AG04450 (cell line): ENCODE measurements at regions of chr12 and their contacts with region 1.

Region 1: GRCh38 chr12:1634590-1635191 is 5.7 kb downstream of the WNT5B start:
- DNase-seq: peak; percentile 49
- H3K4me3 ChIP-seq: no peak overlapping the region
- H3K27ac ChIP-seq: no peak overlapping the region
- H3K27me3 ChIP-seq: no peaks in the 10 kb centered on the region
- CTCF ChIP-seq: peak; percentile 92

Region 2: DNA sequence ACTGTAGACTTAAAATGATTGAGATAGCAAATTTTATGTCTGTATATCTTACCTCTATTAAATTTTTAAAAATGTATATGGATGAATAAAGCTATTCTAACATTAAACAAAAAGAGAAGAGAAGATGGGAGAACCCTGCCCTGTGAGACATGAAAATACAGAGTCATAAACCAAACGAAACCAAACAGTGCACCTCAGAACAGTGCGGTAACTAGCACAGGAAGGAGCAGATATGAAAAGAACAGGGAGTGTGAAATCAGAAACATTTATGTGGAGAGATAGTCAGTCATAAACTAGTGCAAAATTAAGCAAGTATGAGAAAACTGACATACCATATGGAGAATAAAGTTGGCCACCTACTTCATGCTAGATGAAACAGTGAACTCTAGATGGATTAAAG is 508.6 kb before region 1 on chr12:
- CTCF ChIA-PET with region 1: no interaction called
- POLR2A ChIA-PET with region 1: no interaction called
- DNase-seq: no peak
- H3K4me3 ChIP-seq: no peak overlapping the region
- H3K27ac ChIP-seq: no peak overlapping the region
- H3K27me3 ChIP-seq: no peaks in the 10 kb centered on the region
- CTCF ChIP-seq: no peak

Region 3: DNA sequence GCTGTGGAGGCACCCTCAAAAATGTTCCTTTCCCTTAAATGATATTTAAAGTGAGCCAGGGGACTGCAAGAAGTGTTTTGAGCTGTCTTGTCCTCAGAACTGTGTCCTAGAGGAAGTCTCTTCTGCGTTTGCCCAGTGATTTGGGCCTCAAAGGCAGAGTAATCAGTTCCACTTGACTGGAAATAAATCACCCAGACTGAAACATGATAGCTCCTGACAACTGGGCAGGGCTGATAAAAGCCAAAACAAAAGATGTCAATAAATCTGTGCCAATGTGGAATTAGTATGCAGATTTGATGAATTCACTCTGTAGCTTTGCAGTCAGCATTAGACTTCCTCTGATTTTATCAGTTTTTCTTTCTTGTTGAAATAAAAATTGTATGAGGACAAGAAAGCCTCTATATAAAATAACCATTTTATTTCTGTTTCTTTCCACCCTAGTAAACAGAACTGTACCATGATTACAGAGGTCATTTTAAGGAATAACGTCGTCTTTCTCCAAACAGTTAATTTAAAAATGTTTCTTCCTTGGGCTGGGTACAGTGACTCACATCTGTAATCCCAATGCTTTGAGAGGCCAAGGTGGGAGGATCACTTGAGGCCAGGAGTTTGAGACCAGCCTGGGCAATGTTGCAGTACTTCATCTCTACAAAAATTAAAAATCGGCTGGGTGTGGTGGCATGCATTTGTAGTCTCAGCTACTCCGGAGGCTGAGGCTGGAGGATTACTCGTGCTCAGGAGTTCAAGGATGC is 462.9 kb before region 1 on chr12:
- CTCF ChIA-PET with region 1: no interaction called
- POLR2A ChIA-PET with region 1: no interaction called
- DNase-seq: no peak
- H3K4me3 ChIP-seq: no peak overlapping the region
- H3K27ac ChIP-seq: no peak overlapping the region
- H3K27me3 ChIP-seq: no peaks in the 10 kb centered on the region
- CTCF ChIP-seq: no peak

Region 4: DNA sequence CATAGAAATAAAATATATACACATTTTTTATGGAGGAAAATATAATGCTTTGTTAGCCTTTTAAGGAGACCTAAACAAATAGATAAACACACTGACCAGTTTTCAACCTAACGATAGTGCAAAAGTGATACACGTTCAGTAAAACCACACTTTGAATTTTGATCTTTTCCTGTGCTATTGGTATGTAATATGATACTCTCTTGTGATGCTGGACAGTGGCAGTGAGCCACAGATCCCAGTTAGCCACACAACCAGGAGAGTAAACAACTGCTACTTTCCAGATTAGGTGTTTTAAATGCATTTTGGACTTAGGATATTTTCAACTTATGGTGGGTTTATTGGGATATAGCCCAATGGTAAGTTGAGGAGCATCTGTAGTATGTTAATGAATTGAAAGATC is 400.6 kb before region 1 on chr12:
- CTCF ChIA-PET with region 1: no interaction called
- POLR2A ChIA-PET with region 1: no interaction called
- DNase-seq: no peak
- H3K4me3 ChIP-seq: no peak overlapping the region
- H3K27ac ChIP-seq: no peak overlapping the region
- H3K27me3 ChIP-seq: no peaks in the 10 kb centered on the region
- CTCF ChIP-seq: no peak

Region 5: GRCh38 chr12:1418144-1418543 is 216.5 kb before region 1 on chr12:
- CTCF ChIA-PET with region 1: no interaction called
- POLR2A ChIA-PET with region 1: no interaction called
- DNase-seq: no peak
- H3K4me3 ChIP-seq: no peak overlapping the region
- H3K27ac ChIP-seq: no peak overlapping the region
- H3K27me3 ChIP-seq: no peaks in the 10 kb centered on the region
- CTCF ChIP-seq: no peak

Region 6: DNA sequence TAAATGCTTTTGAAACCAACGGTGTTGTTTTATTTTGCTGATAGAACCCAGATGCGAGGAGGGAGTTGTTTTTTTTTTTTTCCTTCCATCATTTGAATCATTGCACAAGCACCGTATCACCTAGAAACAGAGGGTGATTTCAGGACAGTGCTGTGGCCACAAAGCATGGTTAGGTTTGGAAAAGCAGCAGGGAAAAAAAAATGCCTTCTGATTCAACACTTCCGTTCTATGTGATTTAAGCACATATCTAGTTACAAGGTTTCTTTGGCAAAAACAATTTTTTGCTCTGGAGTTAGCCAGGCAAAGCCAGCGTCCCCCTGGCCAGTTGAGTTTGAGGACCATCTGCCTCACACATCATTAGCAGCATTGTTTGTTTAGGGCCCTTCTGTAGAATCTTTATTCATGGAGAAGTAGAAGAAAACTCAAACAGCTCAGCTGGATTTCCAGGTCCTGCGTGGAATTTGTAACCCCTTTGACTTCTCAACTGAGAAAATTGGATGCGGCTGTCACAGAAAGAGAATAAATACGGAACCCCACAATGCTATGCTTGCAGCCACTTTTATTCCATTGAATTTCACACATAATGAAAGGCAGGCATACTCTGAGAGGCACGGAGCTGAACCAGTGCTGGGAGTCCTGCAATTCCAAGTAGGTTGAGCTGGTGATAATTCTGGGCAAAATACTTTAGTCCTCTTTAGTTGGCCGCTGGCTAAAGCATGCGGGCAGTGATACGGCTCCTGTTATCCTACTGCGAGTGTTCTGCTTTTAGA is 22.7 kb before region 1 on chr12:
- CTCF ChIA-PET with region 1: interaction called, 19 read pairs
- POLR2A ChIA-PET with region 1: interaction called, 4 read pairs
- DNase-seq: peak; percentile 76
- H3K4me3 ChIP-seq: peak overlapping the region; percentile 37
- H3K27ac ChIP-seq: peak overlapping the region; percentile 75
- H3K27me3 ChIP-seq: no peaks in the 10 kb centered on the region
- CTCF ChIP-seq: no peak

Region 7: DNA sequence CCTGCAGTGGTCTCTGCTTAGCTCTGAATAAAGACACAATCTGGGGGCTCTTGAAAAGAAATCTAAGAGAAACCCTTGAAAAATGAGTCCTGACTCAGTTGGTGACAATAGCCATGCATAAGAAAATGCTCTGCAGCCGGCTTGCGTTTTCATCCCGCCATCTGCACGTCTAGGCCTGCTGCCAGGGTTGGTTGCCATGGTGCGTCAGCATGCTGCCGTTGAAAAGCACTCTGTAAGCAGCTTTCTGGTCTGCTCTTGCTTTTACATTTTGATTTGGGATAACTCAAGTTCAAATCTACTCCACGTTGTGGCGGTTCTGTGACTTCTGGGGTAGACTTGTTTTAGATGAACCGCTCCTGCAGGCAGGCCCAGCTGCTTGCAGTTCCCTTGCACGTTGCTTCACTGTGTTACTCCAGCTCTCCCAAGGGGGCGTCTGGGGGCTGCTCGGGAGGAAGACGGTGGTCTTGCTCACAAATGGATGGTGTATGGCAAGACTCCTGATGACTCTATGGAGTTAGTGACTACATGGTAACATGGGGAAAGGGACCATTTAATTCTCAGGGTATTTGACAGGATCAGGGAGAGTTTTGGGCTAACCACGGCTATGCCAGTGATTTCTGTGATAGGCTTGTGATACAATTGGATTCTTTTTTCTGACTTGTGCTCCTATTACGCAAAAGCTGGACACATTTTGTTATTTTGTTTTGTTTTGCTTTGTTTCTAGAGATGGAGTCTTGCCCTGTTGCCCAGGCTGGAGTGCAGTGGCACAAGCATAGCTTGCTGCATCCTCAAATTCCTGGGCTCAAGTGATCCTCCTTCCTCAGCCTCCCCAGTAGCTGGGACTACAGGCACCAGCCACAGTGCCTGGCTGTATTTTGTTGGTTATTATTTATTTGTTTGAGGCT is 10.1 kb after region 1 on chr12:
- CTCF ChIA-PET with region 1: interaction called, 32 read pairs
- POLR2A ChIA-PET with region 1: no interaction called
- DNase-seq: peak; percentile 55
- H3K4me3 ChIP-seq: 0 out of 2 replicates have a peak overlapping the region, but pooled peaks have one; percentile 17
- H3K27ac ChIP-seq: no peak overlapping the region
- H3K27me3 ChIP-seq: no peaks in the 10 kb centered on the region
- CTCF ChIP-seq: no peak

Region 8: DNA sequence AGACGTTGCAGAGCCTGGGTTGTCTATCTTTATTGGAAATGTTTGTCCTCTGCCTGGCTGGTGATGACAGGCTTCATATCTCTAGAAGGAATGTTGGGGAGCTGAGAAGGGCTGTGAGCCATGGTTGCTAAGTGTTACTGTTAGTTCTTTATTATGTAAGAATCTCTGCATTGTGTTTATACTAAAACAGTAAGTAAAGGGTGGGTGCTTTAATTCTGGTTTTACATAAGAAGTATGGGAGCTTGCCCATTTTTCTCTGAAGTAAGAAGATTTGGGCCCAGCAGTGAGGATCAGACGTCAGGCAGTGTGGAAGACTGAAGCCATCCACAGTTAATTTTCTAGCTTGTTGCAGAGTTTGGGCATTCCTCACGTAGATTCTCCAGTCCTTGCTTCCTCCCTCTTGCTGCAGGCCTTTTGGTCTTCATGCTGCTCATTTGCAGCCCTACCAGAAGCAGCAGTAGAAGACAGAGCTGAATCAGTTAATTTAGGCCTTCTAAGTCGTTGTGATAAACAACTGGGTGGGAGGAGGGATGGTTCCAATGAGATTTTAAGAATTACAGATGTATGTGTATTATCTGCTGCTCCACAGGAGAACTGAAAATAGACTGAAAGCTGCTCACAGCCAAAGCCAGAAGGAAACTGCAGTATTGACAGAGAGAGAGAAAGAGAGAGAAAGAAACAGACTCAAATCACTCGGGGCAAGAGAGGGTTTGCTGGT is 15.7 kb after region 1 on chr12:
- CTCF ChIA-PET with region 1: interaction called, 32 read pairs
- POLR2A ChIA-PET with region 1: no interaction called
- DNase-seq: no peak
- H3K4me3 ChIP-seq: no peak overlapping the region
- H3K27ac ChIP-seq: no peak overlapping the region
- H3K27me3 ChIP-seq: no peaks in the 10 kb centered on the region
- CTCF ChIP-seq: no peak

Region 9: DNA sequence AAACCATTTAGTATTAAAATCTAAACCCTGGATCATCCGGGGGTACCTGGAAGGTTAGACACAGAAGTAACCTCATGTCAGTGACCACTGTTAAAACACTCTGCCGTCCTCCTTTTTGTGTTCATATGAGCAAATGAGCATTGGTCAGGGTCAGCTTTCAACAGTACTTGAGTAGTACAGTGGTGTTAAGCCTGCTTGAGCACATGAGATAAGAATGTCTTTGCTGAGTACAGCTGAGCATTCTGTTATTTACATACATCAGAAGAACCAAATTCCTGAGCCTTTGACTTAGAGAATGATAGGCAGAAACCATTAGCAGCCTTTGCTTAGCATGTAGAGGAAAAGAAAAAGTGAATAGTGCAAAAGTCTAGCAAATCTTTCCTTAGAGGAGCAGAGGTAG is 147.1 kb after region 1 on chr12:
- CTCF ChIA-PET with region 1: interaction called, 11 read pairs
- POLR2A ChIA-PET with region 1: no interaction called
- DNase-seq: peak; percentile 62
- H3K4me3 ChIP-seq: no peak overlapping the region
- H3K27ac ChIP-seq: no peak overlapping the region
- H3K27me3 ChIP-seq: no peaks in the 10 kb centered on the region
- CTCF ChIP-seq: no peak